ENCODE measurements at regions of chr4 and their contacts with region 1.

Region 1: GRCh38 chr4:93791570-93792195 is 36.9 kb upstream of the ATOH1 start:
- DNase-seq: peak; percentile 66 to 77
- H3K4me3 ChIP-seq: no peak overlapping the region
- H3K4me1 ChIP-seq: peaks cover 2% of the 10 kb centered on the region; the same call in 1 of the 2 replicates
- H3K27me3 ChIP-seq: no peaks in the 10 kb centered on the region

Region 2: DNA sequence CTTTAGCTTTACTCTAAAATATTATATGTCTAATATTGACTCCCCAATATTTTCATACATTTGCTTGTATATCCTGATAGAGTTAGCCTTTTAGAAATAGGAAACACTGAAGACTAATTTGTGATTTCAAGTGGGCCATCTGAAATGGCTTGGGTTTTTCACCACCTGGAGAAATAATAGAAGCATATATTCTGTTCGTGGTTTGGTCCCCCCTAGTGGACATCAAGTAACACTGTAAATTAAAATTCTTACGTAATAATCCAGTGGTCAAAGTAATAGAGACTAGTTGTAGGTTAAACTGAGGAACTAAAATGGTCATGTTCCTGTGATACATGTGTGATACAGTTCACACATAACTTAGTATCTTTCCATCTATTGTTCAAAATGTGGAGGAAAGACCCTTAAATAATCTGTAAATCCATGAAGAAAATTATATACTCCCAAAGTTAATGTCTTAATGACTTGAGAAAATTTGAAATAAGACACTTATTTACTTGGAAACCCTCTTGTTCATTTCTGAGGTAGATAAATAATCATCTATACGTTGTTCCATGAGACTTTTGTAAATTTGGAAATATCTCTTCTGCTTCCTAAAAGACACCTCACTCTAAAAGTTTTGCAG is 336.1 kb after region 1 on chr4:
- in situ Hi-C with region 1: loop called (anchors 10 kb)
- DNase-seq: peak in 1 of 2 experiments; percentile 53
- H3K4me3 ChIP-seq: no peak overlapping the region
- H3K4me1 ChIP-seq: no peaks in the 10 kb centered on the region
- H3K27me3 ChIP-seq: no peaks in the 10 kb centered on the region

Region 3: GRCh38 chr4:94256828-94257227 is 465.1 kb after region 1 on chr4:
- in situ Hi-C with region 1: loop called (anchors 25 kb)
- DNase-seq: no peak
- H3K4me3 ChIP-seq: no peak overlapping the region
- H3K4me1 ChIP-seq: peaks cover 15% of the 10 kb centered on the region
- H3K27me3 ChIP-seq: no peaks in the 10 kb centered on the region

Region 4: GRCh38 chr4:94621491-94622080 is 829.9 kb after region 1 on chr4:
- in situ Hi-C with region 1: loop called (anchors 25 kb)
- DNase-seq: peak; percentile 39 to 60
- H3K4me3 ChIP-seq: no peak overlapping the region
- H3K4me1 ChIP-seq: peaks cover 4% of the 10 kb centered on the region; the same call in 1 of the 2 replicates
- H3K27me3 ChIP-seq: no peaks in the 10 kb centered on the region

Measured in HAP-1 (cell line).